Caco-2 (cell line): ENCODE measurements at regions of chr1 and their contacts with region 1.

Region 1: DNA sequence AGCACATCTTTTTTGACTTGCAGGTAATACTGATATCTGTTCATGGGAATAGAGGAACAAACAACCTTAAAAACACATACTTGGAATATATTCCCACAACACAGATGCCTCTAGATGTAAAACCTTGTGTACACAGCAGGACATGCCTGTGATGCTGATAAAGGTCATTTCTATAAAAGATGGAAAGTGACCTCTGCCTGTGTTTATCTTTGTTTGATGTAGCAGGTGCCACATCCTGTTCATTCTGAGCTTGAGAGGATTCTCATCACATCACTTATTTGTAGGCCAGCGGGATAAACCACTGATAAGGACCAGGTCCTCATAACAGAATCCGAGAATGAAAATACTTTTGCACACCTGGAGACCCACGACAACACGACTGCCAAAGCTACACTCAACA is 133.7 kb downstream of the SMYD2 start:
- DNase-seq: peak; percentile 76 to 77
- H3K4me3 ChIP-seq: no peak overlapping the region
- H3K4me3 Mint-ChIP-seq: peak overlapping the region; percentile 34
- H3K27ac Mint-ChIP-seq: peak overlapping the region; percentile 75
- H3K4me1 ChIP-seq: peaks cover 51% of the 10 kb centered on the region
- H3K4me1 Mint-ChIP-seq: peaks cover 34% of the 10 kb centered on the region
- H3K27me3 ChIP-seq: no peaks in the 10 kb centered on the region
- H3K27me3 Mint-ChIP-seq: no peaks in the 10 kb centered on the region
- CTCF ChIP-seq: no peak

Region 2: GRCh38 chr1:214261206-214262123 is 153.2 kb before region 1 on chr1:
- CTCF ChIA-PET with region 1: no interaction called
- POLR2A ChIA-PET with region 1: no interaction called
- intact Hi-C with region 1: no loop called
- DNase-seq: peak; percentile 87 to 94
- H3K4me3 ChIP-seq: no peak overlapping the region
- H3K4me3 Mint-ChIP-seq: no peak overlapping the region
- H3K27ac Mint-ChIP-seq: no peak overlapping the region
- H3K4me1 ChIP-seq: peaks cover 15% of the 10 kb centered on the region; the same call in 1 of the 2 replicates
- H3K4me1 Mint-ChIP-seq: peaks cover 35% of the 10 kb centered on the region
- H3K27me3 ChIP-seq: no peaks in the 10 kb centered on the region
- H3K27me3 Mint-ChIP-seq: no peaks in the 10 kb centered on the region
- CTCF ChIP-seq: peak; percentile 90 to 99

Region 3: DNA sequence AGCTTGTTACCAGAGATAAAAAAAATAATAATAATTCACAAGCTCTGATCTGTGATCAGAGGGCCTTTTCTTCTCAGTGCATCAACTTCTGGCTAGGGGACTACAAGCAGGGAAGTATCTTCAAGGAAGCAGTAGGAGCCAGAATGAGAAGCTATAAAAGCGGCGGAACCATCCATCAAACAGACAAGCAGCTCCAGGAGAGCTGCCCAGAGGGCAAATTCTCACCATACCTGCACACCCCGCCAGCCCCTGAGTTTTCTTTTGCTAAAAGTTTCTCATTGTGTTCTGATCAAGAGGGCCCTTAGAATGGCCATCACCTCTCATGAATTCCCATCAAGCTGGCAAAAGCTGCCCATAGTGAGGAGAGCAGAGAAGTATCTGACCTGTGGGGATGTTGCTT is 34.3 kb before region 1 on chr1:
- CTCF ChIA-PET with region 1: no interaction called
- POLR2A ChIA-PET with region 1: no interaction called
- intact Hi-C with region 1: loop called (anchors 2 kb)
- DNase-seq: peak; percentile 69 to 82
- H3K4me3 ChIP-seq: no peak overlapping the region
- H3K4me3 Mint-ChIP-seq: peak overlapping the region; percentile 16
- H3K27ac Mint-ChIP-seq: peak overlapping the region; percentile 77
- H3K4me1 ChIP-seq: peaks cover 48% of the 10 kb centered on the region
- H3K4me1 Mint-ChIP-seq: peaks cover 40% of the 10 kb centered on the region
- H3K27me3 ChIP-seq: no peaks in the 10 kb centered on the region
- H3K27me3 Mint-ChIP-seq: no peaks in the 10 kb centered on the region
- CTCF ChIP-seq: no peak

Region 4: DNA sequence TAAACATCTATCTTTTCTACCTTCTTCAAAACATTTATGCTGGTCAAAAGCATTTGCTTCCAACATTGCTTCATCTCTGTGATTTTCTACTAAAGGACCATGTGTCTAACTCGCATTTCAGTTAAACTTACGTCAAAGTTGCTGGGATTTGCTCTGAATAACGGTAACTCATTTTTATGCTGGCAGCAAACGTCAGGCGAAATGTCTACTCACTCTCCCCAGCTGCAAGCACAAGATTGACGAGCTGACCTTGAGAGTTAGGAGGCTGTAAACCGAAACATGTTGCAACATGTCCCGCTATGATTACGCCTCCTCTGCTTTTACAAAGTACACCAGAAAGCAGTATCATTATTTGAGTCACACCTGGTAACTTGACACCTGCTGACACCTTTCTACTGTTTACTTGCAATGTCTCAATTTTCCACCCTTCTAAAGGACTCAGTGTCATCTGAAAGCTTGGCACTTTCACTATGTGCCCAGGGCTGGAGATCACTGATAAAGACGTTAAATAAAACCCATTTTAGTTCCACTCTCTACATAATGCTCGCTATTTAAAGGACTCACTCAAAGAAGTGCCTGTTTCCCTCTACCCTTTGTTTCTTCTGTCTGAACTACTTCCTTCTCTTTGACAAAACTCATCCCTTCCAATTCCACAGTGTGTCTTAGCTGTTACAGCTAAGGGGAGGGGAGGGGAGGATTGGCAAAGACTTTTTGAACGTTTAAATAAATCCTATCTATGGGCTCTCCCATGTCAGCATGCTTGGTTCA is 24.8 kb after region 1 on chr1:
- CTCF ChIA-PET with region 1: no interaction called
- POLR2A ChIA-PET with region 1: no interaction called
- intact Hi-C with region 1: loop called (anchors 1 kb)
- DNase-seq: peak; percentile 74 to 82
- H3K4me3 ChIP-seq: no peak overlapping the region
- H3K4me3 Mint-ChIP-seq: peak overlapping the region; percentile 19
- H3K27ac Mint-ChIP-seq: peak overlapping the region; percentile 63
- H3K4me1 ChIP-seq: peaks cover 63% of the 10 kb centered on the region
- H3K4me1 Mint-ChIP-seq: peaks cover 66% of the 10 kb centered on the region
- H3K27me3 ChIP-seq: no peaks in the 10 kb centered on the region
- H3K27me3 Mint-ChIP-seq: no peaks in the 10 kb centered on the region
- CTCF ChIP-seq: no peak

Region 5: DNA sequence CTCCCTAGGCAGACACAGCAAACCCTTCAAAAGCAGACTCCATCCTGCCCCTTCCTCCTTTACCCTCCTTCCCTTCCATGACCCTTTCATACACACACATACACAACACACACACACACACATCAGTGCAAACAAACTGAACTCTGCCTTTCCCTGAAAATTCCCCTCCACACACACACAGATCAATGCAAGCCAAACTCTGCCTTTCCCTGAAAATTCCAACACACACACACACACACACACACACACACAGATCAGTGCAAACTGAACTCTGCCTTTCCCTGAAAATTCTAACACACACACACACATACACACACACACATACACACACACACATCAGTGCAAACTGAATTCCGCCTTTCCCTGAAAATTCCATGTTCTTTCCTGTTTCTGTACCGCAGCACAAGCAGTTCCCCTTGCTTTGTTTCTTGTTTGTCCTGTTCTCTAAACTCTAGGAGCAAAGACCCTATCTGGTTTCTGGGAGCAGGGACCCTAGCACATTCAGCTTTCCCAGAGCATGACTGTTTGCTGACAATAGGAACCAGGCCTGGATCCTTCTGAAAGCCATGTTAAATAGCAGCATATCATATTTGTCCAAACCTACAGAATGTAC is 45.7 kb after region 1 on chr1:
- CTCF ChIA-PET with region 1: no interaction called
- POLR2A ChIA-PET with region 1: no interaction called
- intact Hi-C with region 1: no loop called
- DNase-seq: no peak
- H3K4me3 ChIP-seq: no peak overlapping the region
- H3K4me3 Mint-ChIP-seq: no peak overlapping the region
- H3K27ac Mint-ChIP-seq: peak overlapping the region; percentile 25
- H3K4me1 ChIP-seq: peaks cover 34% of the 10 kb centered on the region
- H3K4me1 Mint-ChIP-seq: peaks cover 49% of the 10 kb centered on the region
- H3K27me3 ChIP-seq: no peaks in the 10 kb centered on the region
- H3K27me3 Mint-ChIP-seq: no peaks in the 10 kb centered on the region
- CTCF ChIP-seq: no peak

Region 6: GRCh38 chr1:214473387-214473786 is 58.7 kb after region 1 on chr1:
- CTCF ChIA-PET with region 1: no interaction called
- POLR2A ChIA-PET with region 1: no interaction called
- intact Hi-C with region 1: loop called (anchors 2 kb)
- DNase-seq: peak in 1 of 2 experiments; percentile 40
- H3K4me3 ChIP-seq: no peak overlapping the region
- H3K4me3 Mint-ChIP-seq: peak overlapping the region; percentile 31
- H3K27ac Mint-ChIP-seq: peak overlapping the region; percentile 80
- H3K4me1 ChIP-seq: peaks cover 82% of the 10 kb centered on the region
- H3K4me1 Mint-ChIP-seq: peaks cover 62% of the 10 kb centered on the region
- H3K27me3 ChIP-seq: no peaks in the 10 kb centered on the region
- H3K27me3 Mint-ChIP-seq: no peaks in the 10 kb centered on the region
- CTCF ChIP-seq: no peak